Activated CD4-positive, alpha-beta T cell treated with anti-CD3 and anti-CD28 coated beads for 36 hours (primary cell): ENCODE measurements at regions of chr12 and their contacts with region 1.

Region 1: DNA sequence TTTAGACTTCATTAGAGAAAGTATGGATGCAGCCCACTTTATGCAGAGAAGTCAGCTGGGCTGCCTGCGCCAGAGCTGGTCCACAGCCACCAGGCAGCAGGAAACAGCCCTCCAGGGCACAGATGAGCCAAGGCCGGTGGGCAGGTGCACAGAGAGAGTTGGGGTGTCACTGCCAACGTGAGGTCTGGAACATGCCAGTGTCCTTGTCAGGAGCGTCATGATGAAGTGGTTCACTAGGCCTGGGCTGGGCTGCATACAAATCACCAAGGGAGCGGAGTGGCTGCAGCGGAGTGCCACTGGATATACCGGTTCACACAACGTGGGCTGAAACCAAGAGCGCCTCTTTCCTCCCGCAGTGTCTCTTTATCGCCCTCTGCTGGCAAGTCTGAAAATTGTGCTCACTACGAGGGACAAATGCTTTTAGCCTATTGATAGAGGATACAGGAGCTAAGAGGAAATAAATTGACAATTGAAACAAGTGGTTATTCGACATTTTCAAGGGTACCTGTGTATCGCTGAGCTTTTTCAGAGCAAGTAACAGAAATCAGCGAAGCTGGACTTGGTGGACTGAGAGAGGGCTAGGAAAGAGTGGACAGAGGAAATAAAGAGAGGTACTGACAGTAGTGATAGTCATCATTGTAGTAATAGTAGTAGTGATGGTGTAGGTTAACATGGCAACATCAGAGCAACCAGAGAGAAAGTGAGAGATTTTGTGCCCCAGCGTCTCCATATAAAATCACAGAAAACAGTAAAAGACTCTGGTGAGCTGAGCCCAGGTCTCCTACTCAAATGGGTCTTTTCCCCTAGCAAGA is 52.0 kb upstream of the ITPR2 start:
- DNase-seq: peak; percentile 89
- ATAC-seq: peak; percentile 97
- H3K4me3 Mint-ChIP-seq: peak overlapping the region; percentile 49
- H3K27ac Mint-ChIP-seq: no peak overlapping the region
- H3K4me1 Mint-ChIP-seq: peaks cover 10% of the 10 kb centered on the region
- H3K27me3 Mint-ChIP-seq: peaks cover 2% of the 10 kb centered on the region

Region 2: DNA sequence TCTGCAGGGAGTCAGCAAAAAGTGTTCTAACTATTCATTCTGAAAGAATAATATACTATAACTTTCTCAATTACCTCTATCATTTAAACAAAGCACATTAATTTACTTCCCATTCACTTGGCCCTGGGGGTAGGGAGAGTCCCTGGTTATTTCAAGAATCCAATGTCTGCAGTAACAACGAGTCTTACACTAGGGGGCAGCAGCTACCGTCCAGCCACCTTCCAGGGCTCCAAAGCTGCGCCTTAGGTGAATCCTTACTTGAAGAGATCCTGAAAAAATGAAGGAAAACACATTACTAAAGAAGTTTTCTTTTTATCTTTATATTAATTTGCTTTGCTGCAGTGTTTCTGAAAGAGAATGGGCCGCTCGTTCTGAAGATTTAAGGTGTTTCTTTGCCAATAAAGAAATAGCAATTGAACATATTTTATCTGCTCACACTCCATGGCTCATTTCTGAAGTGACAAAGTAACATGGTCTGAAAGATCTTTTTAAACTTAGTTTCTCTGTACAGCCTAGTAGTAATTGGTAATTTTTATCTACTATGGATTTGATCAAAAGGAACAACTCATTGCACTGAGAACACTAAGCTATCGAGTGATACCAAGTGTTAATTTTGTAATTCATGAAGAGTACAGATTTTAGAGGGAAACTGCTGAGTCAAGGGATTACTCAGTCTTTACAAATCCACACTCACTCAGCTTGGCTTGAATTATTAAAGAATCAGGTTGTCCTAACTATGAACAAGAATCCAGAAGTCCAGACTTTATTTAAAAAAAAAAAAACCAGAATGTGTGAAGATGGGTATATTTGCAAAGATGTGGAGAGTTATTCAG is 787.7 kb before region 1 on chr12:
- CTCF ChIA-PET with region 1: no interaction called
- POLR2A ChIA-PET with region 1: no interaction called
- intact Hi-C with region 1: loop called in 1 of 2 experiments (anchors 2 kb)
- DNase-seq: peak; percentile 73
- ATAC-seq: peak; percentile 84
- H3K4me3 Mint-ChIP-seq: no peak overlapping the region
- H3K27ac Mint-ChIP-seq: no peak overlapping the region
- H3K4me1 Mint-ChIP-seq: no peaks in the 10 kb centered on the region
- H3K27me3 Mint-ChIP-seq: peaks cover 11% of the 10 kb centered on the region

Region 3: DNA sequence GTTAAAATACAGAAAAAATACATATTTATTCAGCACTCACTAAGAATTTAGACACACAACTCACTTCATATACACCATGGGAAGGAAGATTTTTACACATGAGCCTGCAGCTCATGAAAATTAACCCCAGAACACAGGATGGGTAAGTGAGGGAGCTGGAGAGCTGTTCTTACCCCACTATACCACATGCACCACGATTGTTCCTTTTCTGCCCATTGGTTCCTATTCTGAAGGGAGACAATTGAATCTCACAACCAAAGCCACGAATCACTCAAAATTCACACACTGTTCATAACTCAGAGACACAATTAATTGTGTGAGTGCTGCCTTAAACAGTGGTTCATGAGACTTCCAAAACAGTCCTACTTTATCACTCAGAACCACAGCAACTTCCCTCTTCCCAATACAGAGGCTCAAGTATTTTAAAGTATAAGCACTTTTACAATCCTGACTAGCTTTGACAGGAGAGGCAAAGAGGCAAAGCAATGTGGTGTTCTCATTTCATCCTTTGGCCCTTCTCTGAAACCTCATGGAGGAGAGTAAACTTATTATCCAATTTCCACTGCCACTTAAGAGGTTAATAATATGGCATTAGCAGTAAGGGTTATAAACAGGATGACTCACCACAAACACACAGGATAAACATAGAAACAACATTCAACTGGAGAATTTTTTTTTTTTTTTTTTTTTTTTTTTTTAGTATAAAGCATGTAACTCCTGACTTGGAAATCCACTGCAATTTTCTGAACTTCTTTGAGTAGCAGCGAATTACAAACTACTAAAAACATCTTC is 111.5 kb before region 1 on chr12:
- CTCF ChIA-PET with region 1: no interaction called
- POLR2A ChIA-PET with region 1: no interaction called
- intact Hi-C with region 1: no loop called
- DNase-seq: no peak
- ATAC-seq: no peak
- H3K4me3 Mint-ChIP-seq: no peak overlapping the region
- H3K27ac Mint-ChIP-seq: no peak overlapping the region
- H3K4me1 Mint-ChIP-seq: peaks cover 8% of the 10 kb centered on the region
- H3K27me3 Mint-ChIP-seq: no peaks in the 10 kb centered on the region

Region 4: DNA sequence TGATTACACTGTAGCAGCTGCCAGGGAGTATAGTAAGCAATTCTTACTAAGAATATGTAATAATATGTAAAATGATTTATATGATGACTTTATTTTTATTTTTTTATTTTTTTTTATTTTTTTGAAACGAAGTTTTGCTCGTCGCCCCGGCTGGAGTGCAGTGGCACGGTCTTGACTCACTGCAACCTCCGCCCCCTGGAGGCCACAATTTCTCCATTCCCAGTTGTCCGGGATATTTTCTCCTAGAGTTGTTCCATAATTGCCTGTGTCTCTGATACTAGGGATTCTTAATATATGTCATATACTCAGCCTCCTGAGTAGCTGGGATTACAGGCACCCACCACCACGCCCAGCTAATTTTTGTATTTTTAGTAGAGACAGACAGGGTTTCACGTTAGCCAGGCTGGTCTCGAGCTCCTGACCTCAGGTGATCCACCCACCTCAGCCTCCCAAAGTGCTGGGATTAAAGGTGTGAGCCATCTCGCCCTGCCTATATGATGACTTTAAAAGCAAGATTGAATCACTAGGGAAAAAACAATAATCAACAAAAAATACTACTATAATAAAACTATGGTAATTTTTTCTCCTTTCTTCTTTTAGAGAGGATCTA is 39.8 kb before region 1 on chr12:
- CTCF ChIA-PET with region 1: interaction called, 11 read pairs
- POLR2A ChIA-PET with region 1: no interaction called
- intact Hi-C with region 1: no loop called
- DNase-seq: peak; percentile 31
- ATAC-seq: no peak
- H3K4me3 Mint-ChIP-seq: no peak overlapping the region
- H3K27ac Mint-ChIP-seq: no peak overlapping the region
- H3K4me1 Mint-ChIP-seq: peaks cover 15% of the 10 kb centered on the region
- H3K27me3 Mint-ChIP-seq: peaks cover 5% of the 10 kb centered on the region

Region 5: GRCh38 chr12:26874501-26875296 is 10.3 kb before region 1 on chr12:
- CTCF ChIA-PET with region 1: interaction called, 20 read pairs
- POLR2A ChIA-PET with region 1: no interaction called
- intact Hi-C with region 1: no loop called
- DNase-seq: no peak
- ATAC-seq: no peak
- H3K4me3 Mint-ChIP-seq: no peak overlapping the region
- H3K27ac Mint-ChIP-seq: no peak overlapping the region
- H3K4me1 Mint-ChIP-seq: peaks cover 9% of the 10 kb centered on the region
- H3K27me3 Mint-ChIP-seq: no peaks in the 10 kb centered on the region

Region 6: GRCh38 chr12:26921886-26922285 is 36.9 kb after region 1 on chr12:
- CTCF ChIA-PET with region 1: interaction called, 10 read pairs
- POLR2A ChIA-PET with region 1: interaction called, 3 read pairs
- intact Hi-C with region 1: no loop called
- DNase-seq: no peak
- ATAC-seq: no peak
- H3K4me3 Mint-ChIP-seq: no peak overlapping the region
- H3K27ac Mint-ChIP-seq: no peak overlapping the region
- H3K4me1 Mint-ChIP-seq: peaks cover 3% of the 10 kb centered on the region
- H3K27me3 Mint-ChIP-seq: no peaks in the 10 kb centered on the region